Gastrocnemius medialis (tissue), 4 donors: ENCODE measurements at regions of chrX and their contacts with region 1.

Region 1: DNA sequence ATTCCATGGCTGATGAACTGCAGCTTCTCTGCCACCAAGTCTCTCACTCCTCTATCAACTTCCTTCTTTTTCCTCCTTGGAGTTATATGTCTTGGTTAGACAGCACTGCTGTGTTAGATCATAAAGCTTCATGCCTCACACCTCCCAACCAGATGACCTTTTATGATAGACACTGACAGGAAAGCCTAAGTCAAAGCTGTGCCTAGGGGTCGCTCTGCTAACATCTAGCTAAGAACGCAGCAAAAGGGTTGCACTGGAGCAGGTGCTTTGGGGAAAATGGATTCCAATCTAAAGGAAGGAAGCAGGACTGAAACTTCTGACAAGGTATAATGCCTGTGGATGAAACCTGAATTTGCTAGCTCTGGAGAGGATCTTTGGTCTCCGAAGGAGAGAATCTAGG is 509.7 kb downstream of the SMARCA1 start:
- DNase-seq: no peak
- ATAC-seq: no peak
- H3K4me3 ChIP-seq: no peak overlapping the region
- H3K27ac ChIP-seq: no peak overlapping the region
- H3K4me1 ChIP-seq: no peaks in the 10 kb centered on the region
- H3K27me3 ChIP-seq: no peaks in the 10 kb centered on the region
- CTCF ChIP-seq: no peak
- POLR2A ChIP-seq: no peak

Region 2: GRCh38 chrX:128051526-128051925 is 962.0 kb before region 1 on chrX:
- in situ Hi-C with region 1: no loop called
- intact Hi-C with region 1: no loop called
- DNase-seq: no peak
- ATAC-seq: no peak
- H3K4me3 ChIP-seq: no peak overlapping the region
- H3K27ac ChIP-seq: no peak overlapping the region
- H3K4me1 ChIP-seq: no peaks in the 10 kb centered on the region
- H3K27me3 ChIP-seq: no peaks in the 10 kb centered on the region
- CTCF ChIP-seq: no peak
- POLR2A ChIP-seq: no peak

Region 3: DNA sequence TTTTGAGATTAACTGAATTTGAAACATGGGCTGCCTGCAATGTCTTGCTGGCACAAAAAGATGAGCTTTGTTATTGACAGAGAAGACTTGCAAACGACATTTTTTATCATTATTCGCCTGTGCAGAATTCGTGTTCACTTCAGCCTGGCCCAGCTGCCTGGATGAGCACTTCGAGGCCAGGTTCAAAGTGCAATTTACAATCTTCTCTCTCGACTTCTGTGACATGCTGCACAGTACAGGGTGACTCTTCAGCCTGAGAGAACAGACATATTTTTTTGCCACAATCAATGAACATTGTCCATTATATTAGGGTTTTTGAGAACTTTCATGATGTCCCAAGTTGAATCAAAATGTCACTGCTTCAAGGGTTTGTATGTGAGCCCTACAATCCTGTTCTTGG is 106.8 kb before region 1 on chrX:
- in situ Hi-C with region 1: loop called in 1 of 4 experiments (anchors 25 kb)
- intact Hi-C with region 1: no loop called
- DNase-seq: no peak
- ATAC-seq: no peak
- H3K4me3 ChIP-seq: no peak overlapping the region
- H3K27ac ChIP-seq: no peak overlapping the region
- H3K4me1 ChIP-seq: no peaks in the 10 kb centered on the region
- H3K27me3 ChIP-seq: no peaks in the 10 kb centered on the region
- CTCF ChIP-seq: no peak
- POLR2A ChIP-seq: no peak

Region 4: GRCh38 chrX:128975745-128976144 is 37.8 kb before region 1 on chrX:
- in situ Hi-C with region 1: no loop called
- intact Hi-C with region 1: no loop called
- DNase-seq: no peak
- ATAC-seq: no peak
- H3K4me3 ChIP-seq: no peak overlapping the region
- H3K27ac ChIP-seq: no peak overlapping the region
- H3K4me1 ChIP-seq: no peaks in the 10 kb centered on the region
- H3K27me3 ChIP-seq: no peaks in the 10 kb centered on the region
- CTCF ChIP-seq: no peak
- POLR2A ChIP-seq: no peak